ENCODE measurements at regions of chr19 and their contacts with region 1.

Region 1: DNA sequence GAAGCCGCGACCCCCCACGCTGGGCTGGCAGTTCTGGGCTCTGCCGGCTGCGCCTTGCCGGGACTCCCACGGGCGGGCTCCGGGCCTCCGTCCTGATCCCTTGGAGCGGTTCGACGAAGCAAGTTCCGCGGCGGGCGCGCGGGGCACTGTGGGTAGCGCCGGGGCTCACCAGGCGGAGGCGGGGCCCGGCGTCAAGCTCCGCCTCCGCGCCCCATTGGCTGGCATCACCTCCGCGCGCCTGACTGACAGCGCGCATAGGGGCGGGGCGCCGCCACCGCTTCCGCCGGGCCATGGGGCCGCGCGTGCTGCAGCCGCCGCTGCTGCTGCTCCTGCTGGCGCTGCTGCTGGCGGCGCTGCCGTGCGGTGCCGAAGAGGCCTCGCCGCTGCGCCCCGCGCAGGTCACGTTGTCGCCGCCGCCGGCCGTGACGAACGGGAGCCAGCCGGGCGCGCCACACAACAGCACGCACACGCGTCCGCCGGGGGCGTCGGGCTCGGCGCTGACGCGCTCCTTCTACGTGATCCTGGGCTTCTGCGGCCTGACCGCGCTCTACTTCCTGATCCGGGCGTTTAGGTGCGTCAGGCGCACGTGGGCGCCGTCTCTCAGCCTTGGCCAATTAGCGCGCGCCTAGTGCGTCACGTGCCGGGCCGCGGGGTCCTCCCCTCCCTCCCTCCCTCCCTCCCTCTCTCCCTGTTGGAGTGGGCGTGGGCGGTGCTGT is at the start of gene FAM174C:
- DNase-seq: peak; percentile 93 to 96
- ATAC-seq: peak; percentile 74 to 80
- H3K4me3 ChIP-seq: peak within 1 kb of the TSS; percentile 68 to 83 (median 76)
- H3K27ac ChIP-seq: peak within 1 kb of the TSS; percentile 92 to 99 (median 98)
- H3K4me1 ChIP-seq: peaks cover 57 to 58% of the 10 kb centered on the region in 2 donors
- H3K27me3 ChIP-seq: no peaks in the 10 kb centered on the region
- CTCF ChIP-seq: peak in 2 of 5 experiments; percentile 7 to 28
- POLR2A ChIP-seq: peak; percentile 80 to 91
- total RNA-seq, gene FAM174C: 18.7 to 36.7 (median 28.7) TPM

Region 2: DNA sequence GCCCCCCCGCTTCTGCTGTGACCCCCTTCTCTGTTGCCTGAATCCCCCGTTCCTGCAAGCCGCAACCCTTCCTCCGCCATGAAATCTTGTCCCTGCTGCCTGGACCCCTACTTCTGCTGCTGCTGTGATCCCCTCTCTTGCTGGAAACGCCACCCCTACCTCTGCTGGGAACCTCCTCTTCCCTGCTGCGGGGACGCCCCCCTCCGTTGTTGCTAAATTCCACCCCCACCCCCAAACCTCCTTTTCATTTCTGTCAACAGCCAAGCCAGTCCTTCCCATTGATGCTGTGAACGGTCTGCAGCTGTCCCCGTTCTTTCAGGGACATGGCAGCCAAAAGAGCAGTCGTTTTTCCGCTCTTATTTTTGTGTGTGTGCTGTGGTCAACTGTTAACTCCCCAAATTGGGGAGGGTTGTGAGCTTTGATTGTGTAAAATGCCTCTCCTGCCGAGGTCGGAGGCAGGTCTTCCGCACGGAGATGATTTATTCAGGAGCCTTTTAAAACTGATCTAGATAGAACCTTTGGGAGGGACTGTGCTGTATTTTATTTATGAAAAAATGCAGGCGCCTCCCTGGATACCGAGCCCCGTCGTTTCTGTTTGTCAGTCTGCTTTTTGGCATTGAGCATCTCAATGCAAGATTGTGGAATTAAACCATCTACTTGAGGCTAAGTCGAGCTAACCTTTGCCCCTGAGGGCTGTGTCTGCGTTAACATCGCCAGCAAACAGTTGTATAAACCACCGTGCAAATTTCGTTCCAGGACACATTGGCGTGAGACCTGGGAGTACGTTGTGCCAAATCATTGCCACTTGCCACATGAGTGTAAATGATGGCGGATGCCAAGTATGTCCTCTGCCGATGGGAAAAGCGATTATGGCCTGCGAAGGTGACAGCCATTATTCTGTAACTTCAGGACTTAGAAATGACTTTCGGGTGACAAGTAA is 80.4 kb after region 1 on chr19:
- in situ Hi-C with region 1: no loop called
- intact Hi-C with region 1: loop called (anchors 1 kb)
- DNase-seq: no peak
- ATAC-seq: no peak
- H3K4me3 ChIP-seq: peak overlapping the region; percentile 65 to 80 (median 74)
- H3K27ac ChIP-seq: peak overlapping the region; percentile 82 to 97 (median 90)
- H3K4me1 ChIP-seq: peaks cover 15 to 25% of the 10 kb centered on the region in 2 donors
- H3K27me3 ChIP-seq: no peaks in the 10 kb centered on the region
- CTCF ChIP-seq: no peak
- POLR2A ChIP-seq: no peak

Region 3: GRCh38 chr19:1401138-1401888 is 125.9 kb after region 1 on chr19 and contains the start of gene GAMT:
- in situ Hi-C with region 1: no loop called
- intact Hi-C with region 1: loop called (anchors 5 kb)
- DNase-seq: no peak
- ATAC-seq: peak; percentile 37 to 40
- H3K4me3 ChIP-seq: peak within 1 kb of the TSS; percentile 60 to 90 (median 63)
- H3K27ac ChIP-seq: peak within 1 kb of the TSS; percentile 88 to 99 (median 91)
- H3K4me1 ChIP-seq: peaks cover 11 to 14% of the 10 kb centered on the region in 2 donors
- H3K27me3 ChIP-seq: no peaks in the 10 kb centered on the region
- CTCF ChIP-seq: peak; percentile 34 to 66 (median 46)
- POLR2A ChIP-seq: no peak
- total RNA-seq, gene GAMT: 269 to 421 (median 373) TPM

Region 4: GRCh38 chr19:1513499-1514294 is 238.3 kb after region 1 on chr19:
- in situ Hi-C with region 1: no loop called
- intact Hi-C with region 1: loop called (anchors 5 kb)
- DNase-seq: peak in 1 of 2 donors; percentile 54
- ATAC-seq: peak; percentile 73 to 75
- H3K4me3 ChIP-seq: peak overlapping the region; percentile 64 to 69 (median 64)
- H3K27ac ChIP-seq: peak overlapping the region; percentile 83 to 91 (median 89)
- H3K4me1 ChIP-seq: peaks cover 3 to 29% of the 10 kb centered on the region in 2 donors
- H3K27me3 ChIP-seq: no peaks in the 10 kb centered on the region
- CTCF ChIP-seq: peak; percentile 41 to 90 (median 83)
- POLR2A ChIP-seq: no peak

Measured in gastrocnemius medialis (tissue), 4 donors.